Endothelial cell of umbilical vein (primary cell): ENCODE measurements at regions of chr10 and their contacts with region 1.

Region 1: DNA sequence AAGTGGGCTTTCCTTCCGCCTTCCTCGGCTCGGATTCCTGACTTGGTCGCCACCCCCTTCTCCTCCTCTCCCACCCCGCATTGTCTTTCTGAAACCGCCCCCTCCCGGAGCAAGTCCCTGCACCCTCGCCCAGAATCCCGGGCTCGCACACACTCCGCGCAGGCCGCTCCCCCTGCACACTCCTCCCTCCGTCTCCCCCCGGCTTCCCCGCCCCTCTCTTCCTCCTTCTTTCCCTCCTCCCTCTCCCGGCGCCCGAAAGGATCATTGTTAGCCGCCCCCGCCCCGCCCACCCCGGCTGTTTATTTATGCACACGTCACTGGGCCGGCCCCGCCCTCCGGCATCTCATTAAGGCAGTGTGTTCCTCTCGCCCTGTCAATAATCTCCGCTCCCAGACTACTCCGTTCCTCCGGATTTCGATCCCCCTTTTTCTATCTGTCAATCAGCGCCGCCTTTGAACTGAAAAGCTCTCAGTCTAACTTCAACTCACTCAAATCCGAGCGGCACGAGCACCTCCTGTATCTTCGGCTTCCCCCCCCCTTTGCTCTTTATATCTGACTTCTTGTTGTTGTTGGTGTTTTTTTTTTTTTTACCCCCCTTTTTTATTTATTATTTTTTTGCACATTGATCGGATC is at the start of gene TCF7L2:
- DNase-seq: peak; percentile 97
- H3K4me3 ChIP-seq: peak within 1 kb of the TSS; percentile 73 to 100 (median 98)
- H3K27ac ChIP-seq: peak within 1 kb of the TSS; percentile 91
- H3K4me1 ChIP-seq: peaks cover 26% of the 10 kb centered on the region
- H3K27me3 ChIP-seq: no peaks in the 10 kb centered on the region
- CTCF ChIP-seq: peak in 1 of 2 donors; percentile 6
- POLR2A ChIP-seq: no peak
- total RNA-seq, gene TCF7L2: 21.8 and 22.1 TPM in 2 replicates

Region 2: DNA sequence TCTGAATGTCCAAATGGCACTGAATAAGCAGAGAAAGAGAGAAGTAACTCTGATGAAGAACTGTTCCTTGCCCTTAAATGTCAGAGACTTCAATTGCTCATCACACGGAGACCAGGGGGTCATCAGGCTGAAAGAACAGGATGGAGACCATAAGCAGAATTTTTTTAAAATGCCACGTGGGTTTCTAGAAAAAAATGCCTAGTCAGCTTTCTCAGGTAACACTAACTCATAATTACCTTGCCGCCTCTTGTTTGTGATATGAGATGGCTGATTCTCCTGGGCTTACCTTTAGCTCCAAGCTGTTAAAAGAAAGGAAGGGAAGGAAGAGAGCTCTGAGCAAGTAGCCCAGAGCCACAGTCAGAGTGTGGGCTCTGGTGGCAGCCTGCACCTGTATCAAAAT is 1138.5 kb before region 1 on chr10:
- CTCF ChIA-PET with region 1: no interaction called
- POLR2A ChIA-PET with region 1: no interaction called
- dilution Hi-C with region 1: no loop called
- intact Hi-C with region 1: no loop called
- DNase-seq: no peak
- H3K4me3 ChIP-seq: no peak overlapping the region
- H3K27ac ChIP-seq: no peak overlapping the region
- H3K4me1 ChIP-seq: no peaks in the 10 kb centered on the region
- H3K27me3 ChIP-seq: no peaks in the 10 kb centered on the region
- CTCF ChIP-seq: no peak
- POLR2A ChIP-seq: no peak

Region 3: DNA sequence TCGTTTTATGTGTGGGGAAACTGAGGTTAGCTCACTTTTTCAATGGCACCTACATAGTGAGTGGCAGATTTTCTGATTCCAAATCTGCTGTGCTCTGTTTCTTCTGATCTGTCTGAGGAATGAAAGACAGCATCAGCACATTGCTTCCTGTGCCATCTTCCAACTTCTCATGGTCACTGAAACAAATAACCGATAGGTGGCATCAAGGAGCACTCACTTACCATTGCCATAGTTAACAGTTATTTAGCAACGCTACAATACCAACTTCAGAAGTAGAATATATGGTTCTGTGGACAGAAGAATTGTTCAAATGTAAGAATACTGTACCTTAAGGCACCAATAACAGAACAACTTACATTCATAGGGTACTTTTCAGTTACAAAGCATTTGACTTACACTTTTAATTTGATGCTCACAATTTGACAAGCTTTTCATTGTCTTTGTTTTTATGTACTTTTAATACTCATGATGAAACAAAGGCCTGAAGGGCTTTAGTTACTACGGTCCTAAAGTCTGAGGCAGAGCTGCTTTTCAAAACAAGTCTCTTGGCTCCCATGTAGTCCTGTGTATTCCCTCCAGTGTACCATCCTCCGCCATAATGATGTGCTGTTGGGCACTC is 228.8 kb before region 1 on chr10:
- CTCF ChIA-PET with region 1: interaction called, 3 read pairs
- POLR2A ChIA-PET with region 1: no interaction called
- dilution Hi-C with region 1: no loop called
- intact Hi-C with region 1: loop called (anchors 2 kb)
- DNase-seq: peak; percentile 54
- H3K4me3 ChIP-seq: no peak overlapping the region
- H3K27ac ChIP-seq: no peak overlapping the region
- H3K4me1 ChIP-seq: no peaks in the 10 kb centered on the region
- H3K27me3 ChIP-seq: no peaks in the 10 kb centered on the region
- CTCF ChIP-seq: peak; percentile 56 to 57
- POLR2A ChIP-seq: no peak

Region 4: DNA sequence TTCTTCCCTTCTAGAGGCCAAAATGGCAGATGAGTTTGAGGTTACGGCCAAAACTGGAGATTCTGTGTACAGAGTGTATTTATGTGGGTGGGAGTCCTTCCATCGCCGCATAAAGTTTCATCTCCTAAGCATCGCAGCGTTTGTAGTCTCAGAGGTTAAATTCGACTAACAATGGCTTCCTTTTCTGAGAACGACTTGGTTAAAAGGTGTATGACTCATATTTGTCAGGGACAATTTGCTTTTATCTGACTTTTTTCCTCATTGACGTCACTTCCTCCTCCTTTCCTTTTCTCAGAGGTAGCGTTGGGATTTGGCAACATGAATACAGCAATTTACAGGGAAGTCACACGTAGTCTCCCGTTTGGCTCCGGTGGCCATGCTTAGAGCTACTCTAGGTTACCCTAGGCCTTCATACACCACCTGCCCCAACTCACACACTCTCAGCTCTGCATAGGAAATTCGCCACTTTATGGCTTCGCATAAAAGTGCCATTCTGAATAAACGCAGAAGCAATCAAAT is 37.5 kb before region 1 on chr10:
- CTCF ChIA-PET with region 1: no interaction called
- POLR2A ChIA-PET with region 1: no interaction called
- dilution Hi-C with region 1: no loop called
- intact Hi-C with region 1: loop called (anchors 2 kb)
- DNase-seq: peak; percentile 69
- H3K4me3 ChIP-seq: no peak overlapping the region
- H3K27ac ChIP-seq: peak overlapping the region; percentile 40
- H3K4me1 ChIP-seq: peaks cover 12% of the 10 kb centered on the region
- H3K27me3 ChIP-seq: no peaks in the 10 kb centered on the region
- CTCF ChIP-seq: no peak
- POLR2A ChIP-seq: no peak

Region 5: DNA sequence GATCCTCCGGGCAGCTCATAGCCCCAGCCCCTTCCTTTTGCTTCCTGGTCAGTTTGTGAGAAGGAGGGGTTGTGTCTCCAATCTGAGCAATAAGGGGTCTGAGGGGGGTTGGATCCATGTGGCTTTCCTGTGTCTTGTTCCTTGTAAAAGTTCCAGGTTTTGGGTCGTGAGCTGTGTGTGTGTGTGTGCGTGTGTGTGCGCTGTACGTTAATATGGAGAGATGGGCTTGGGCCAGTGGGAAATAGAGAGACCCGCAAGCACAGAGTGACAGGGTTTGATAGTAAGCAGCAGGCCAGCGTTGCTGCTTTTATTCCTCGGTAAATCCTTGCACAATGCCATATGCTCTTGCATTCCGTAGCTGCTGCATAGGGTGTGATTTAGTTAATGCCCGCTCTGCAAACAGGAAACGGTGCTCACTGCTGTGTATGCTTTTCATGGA is 108.6 kb after region 1 on chr10:
- CTCF ChIA-PET with region 1: interaction called, 3 read pairs
- POLR2A ChIA-PET with region 1: interaction called, 3 read pairs
- dilution Hi-C with region 1: no loop called
- intact Hi-C with region 1: loop called (anchors 2 kb)
- DNase-seq: peak; percentile 59
- H3K4me3 ChIP-seq: peak overlapping the region in 1 of 3 experiments; percentile 13
- H3K27ac ChIP-seq: peak overlapping the region; percentile 68
- H3K4me1 ChIP-seq: peaks cover 56% of the 10 kb centered on the region
- H3K27me3 ChIP-seq: no peaks in the 10 kb centered on the region
- CTCF ChIP-seq: no peak
- POLR2A ChIP-seq: no peak

Region 6: DNA sequence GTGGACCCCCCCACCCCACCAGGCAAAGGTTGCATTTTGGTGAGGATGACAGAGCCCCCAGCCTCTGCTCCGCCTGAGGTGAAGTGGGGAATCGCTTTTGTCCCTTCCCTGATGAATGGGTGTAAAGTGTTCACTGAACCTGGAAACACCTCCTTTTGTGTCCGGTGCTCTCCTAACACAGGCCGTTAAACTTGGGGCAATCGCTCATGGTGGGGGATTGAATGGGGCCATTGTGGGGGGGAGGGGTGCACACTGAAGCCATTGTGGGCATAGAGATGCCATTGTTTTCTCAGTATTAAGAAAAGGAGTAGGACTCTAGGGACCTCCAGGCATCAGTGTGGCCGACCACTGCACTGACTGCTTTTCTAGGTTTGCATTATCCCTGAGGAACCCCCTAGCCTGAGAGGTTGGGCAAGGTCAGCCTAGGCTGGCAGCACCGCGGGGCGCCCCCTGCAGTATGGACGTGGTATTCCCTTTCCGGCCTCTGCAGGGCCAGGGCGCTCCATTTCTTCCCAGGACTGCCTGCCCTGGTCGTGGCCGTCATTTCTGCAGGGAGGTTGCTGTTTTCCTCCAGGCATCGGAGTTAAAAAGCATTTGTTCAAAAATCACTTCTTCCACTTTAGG is 158.3 kb after region 1 on chr10:
- CTCF ChIA-PET with region 1: no interaction called
- POLR2A ChIA-PET with region 1: no interaction called
- dilution Hi-C with region 1: no loop called
- intact Hi-C with region 1: loop called (anchors 1 kb)
- DNase-seq: no peak
- H3K4me3 ChIP-seq: no peak overlapping the region
- H3K27ac ChIP-seq: no peak overlapping the region
- H3K4me1 ChIP-seq: no peaks in the 10 kb centered on the region
- H3K27me3 ChIP-seq: no peaks in the 10 kb centered on the region
- CTCF ChIP-seq: peak; percentile 49 to 54
- POLR2A ChIP-seq: no peak

Region 7: DNA sequence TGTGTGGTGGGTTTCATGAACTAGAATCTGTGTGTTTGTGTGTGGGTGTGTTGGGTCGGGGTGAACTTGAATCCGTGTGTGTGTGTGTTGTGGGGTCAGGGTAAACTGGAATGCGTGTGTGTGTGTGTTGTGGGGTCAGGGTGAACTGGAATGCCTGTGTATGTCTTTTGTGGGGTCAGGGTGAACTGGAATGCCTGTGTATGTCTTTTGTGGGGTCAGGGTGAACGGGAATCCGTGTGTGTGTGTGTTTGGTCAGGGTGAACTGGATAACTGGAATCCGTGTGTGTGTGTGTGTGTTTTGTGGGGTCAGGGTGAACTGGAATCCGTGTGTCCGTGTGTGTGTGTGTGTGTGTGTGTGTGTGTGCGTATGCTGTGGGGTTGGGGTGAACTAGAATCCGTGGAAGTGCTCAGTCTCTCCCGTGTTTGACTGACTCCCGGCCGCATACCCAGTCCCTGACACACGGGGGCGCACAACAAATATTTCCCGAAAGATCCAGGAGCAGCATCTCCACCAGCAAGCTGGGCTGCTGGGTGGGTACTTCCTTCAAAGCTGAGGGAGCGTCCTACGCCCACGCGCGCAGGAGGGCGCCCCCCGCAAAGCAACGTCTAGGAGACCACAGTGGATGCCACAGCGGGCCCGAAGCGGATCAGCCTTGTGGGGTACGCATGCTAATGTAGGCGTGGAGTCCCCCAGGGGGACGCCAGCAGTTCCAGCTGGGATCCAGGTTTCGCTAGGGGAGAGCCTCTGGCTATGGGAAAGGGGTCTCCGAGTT is 728.9 kb after region 1 on chr10:
- CTCF ChIA-PET with region 1: no interaction called
- POLR2A ChIA-PET with region 1: no interaction called
- dilution Hi-C with region 1: no loop called
- intact Hi-C with region 1: loop called (anchors 5 kb)
- DNase-seq: peak; percentile 87
- H3K4me3 ChIP-seq: peak overlapping the region; percentile 77 to 82 (median 78)
- H3K27ac ChIP-seq: peak overlapping the region; percentile 90
- H3K4me1 ChIP-seq: peaks cover 11% of the 10 kb centered on the region
- H3K27me3 ChIP-seq: no peaks in the 10 kb centered on the region
- CTCF ChIP-seq: peak; percentile 73 to 81
- POLR2A ChIP-seq: no peak